Endothelial cell of umbilical vein (primary cell): ENCODE measurements at regions of chr2 and their contacts with region 1.

Region 1: GRCh38 chr2:176413786-176414185 is 144.5 kb downstream of the MTX2 start:
- DNase-seq: peak; percentile 49
- H3K4me3 ChIP-seq: no peak overlapping the region
- H3K27ac ChIP-seq: peak overlapping the region; percentile 87
- H3K4me1 ChIP-seq: peaks cover 28% of the 10 kb centered on the region
- H3K27me3 ChIP-seq: no peaks in the 10 kb centered on the region
- CTCF ChIP-seq: no peak
- POLR2A ChIP-seq: no peak

Region 2: GRCh38 chr2:176056406-176056805 is 357.4 kb before region 1 on chr2:
- CTCF ChIA-PET with region 1: no interaction called
- POLR2A ChIA-PET with region 1: no interaction called
- dilution Hi-C with region 1: no loop called
- intact Hi-C with region 1: no loop called
- DNase-seq: no peak
- H3K4me3 ChIP-seq: no peak overlapping the region
- H3K27ac ChIP-seq: no peak overlapping the region
- H3K4me1 ChIP-seq: no peaks in the 10 kb centered on the region
- H3K27me3 ChIP-seq: peaks cover 3 to 11% of the 10 kb centered on the region in 2 experiments
- CTCF ChIP-seq: no peak
- POLR2A ChIP-seq: no peak

Region 3: DNA sequence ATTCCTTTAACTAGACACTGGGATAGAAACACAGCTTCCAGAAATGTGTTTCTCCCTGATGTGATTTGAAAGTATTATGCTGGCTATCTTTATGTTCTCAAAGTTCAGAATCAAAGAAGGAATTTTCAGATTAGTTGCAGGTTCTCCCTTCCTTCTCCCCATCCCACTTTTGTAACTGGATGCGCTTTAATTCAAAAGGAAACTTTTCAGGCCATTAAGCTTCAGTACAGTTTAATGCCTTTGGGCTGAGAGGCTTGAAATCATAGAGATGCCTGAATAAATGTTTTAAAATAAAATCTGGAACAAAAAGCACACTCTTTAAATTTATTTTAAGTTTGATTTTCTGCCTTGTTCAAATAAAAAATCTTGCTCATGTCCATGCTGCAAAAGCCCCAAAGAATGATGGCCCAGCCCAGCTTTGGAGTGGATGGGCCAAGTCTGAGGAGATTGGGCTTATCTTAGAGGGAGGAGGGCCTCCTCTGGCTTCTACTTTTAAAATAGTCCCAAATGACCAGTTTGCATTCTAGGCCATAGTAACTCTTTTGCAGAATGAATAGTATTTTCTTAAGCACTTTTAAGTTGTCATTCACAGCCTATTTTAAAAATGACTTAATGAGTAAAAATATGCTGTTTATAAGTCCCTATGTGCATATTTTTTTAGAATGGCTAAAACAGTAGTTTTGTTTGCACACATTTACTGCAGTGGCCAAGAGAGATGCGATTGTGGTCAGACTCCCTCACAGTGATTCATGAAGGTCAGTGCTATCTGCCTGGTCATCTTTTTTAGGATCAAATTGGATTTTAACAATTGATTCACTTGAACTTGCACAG is 15.3 kb before region 1 on chr2:
- CTCF ChIA-PET with region 1: interaction called, 4 read pairs
- POLR2A ChIA-PET with region 1: no interaction called
- dilution Hi-C with region 1: no loop called
- intact Hi-C with region 1: loop called (anchors 1 kb)
- DNase-seq: no peak
- H3K4me3 ChIP-seq: no peak overlapping the region
- H3K27ac ChIP-seq: no peak overlapping the region
- H3K4me1 ChIP-seq: no peaks in the 10 kb centered on the region
- H3K27me3 ChIP-seq: no peaks in the 10 kb centered on the region
- CTCF ChIP-seq: no peak
- POLR2A ChIP-seq: no peak

Region 4: GRCh38 chr2:176424746-176425145 is 11.0 kb after region 1 on chr2:
- CTCF ChIA-PET with region 1: no interaction called
- POLR2A ChIA-PET with region 1: no interaction called
- dilution Hi-C with region 1: no loop called
- intact Hi-C with region 1: no loop called
- DNase-seq: no peak
- H3K4me3 ChIP-seq: no peak overlapping the region
- H3K27ac ChIP-seq: no peak overlapping the region
- H3K4me1 ChIP-seq: peaks cover 18% of the 10 kb centered on the region
- H3K27me3 ChIP-seq: no peaks in the 10 kb centered on the region
- CTCF ChIP-seq: no peak
- POLR2A ChIP-seq: no peak

Region 5: DNA sequence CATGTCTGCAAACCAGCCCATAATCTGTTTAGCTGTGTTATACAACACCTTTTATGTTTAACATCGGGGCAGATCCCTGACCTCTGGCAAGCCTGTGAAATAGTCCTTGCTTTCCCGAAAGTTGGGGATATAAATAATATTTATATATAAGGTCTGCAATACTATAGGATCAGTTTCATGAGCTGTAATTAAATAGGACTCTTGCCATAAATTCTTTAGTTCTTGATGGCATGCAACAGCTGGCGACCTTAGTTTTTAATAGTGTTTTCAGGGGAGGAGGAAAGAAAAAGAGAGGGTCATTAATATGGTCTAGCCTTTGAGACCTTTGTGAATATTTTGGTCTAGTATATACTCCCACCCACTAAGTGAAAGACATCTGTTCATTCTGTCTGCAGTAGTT is 21.9 kb after region 1 on chr2:
- CTCF ChIA-PET with region 1: no interaction called
- POLR2A ChIA-PET with region 1: no interaction called
- dilution Hi-C with region 1: no loop called
- intact Hi-C with region 1: no loop called
- DNase-seq: no peak
- H3K4me3 ChIP-seq: no peak overlapping the region
- H3K27ac ChIP-seq: no peak overlapping the region
- H3K4me1 ChIP-seq: no peaks in the 10 kb centered on the region
- H3K27me3 ChIP-seq: no peaks in the 10 kb centered on the region
- CTCF ChIP-seq: no peak
- POLR2A ChIP-seq: no peak